ENCODE measurements at regions of chr1 and their contacts with region 1.

Region 1: GRCh38 chr1:109432336-109432735 is 6.1 kb upstream of the PSMA5 start:
- DNase-seq: no peak
- H3K4me3 ChIP-seq: no peak overlapping the region
- H3K27ac ChIP-seq: no peak overlapping the region
- H3K4me1 ChIP-seq: peaks cover 5% of the 10 kb centered on the region
- H3K27me3 ChIP-seq: no peaks in the 10 kb centered on the region
- CTCF ChIP-seq: no peak

Region 2: DNA sequence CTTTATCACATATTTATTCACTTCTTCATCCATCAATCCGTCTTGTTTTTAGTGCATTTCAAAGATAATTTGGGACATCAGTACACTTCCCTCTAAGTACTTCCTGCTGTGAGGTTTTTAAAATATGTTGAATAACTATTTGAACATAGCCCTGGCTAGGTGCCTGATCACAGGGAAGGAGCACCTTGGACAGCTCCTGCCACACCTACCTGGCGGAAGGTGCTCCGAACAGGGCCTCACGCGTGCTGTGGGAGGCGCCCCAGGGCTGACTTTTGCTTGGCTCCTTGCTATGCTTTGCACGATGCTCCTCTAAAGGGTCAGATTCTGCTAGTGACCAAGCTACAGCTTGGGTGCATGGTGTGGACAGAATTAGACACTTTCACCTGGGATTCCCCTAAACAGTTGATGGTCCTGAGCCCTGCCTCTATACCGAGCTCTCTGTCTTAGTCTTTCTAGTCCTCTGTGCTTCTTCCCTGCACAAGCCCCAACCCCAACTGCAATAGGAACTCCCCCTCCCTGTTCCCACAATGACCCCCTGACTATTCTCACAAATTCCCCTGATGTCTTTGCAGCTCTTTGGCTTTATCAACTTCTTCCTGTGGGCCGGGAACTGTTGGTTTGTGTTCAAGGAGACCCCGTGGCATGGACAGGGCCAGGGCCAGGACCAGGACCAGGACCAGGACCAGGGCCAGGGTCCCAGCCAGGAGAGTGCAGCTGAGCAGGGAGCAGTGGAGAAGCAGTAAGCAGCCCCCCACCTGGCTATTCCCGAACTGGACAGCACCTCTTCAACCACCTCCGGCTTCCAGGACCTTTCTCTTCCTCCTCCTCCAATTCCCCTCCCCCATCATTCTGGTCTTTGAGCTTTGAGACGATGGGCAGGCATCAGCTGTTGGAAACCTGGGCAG is 46.7 kb after region 1 on chr1:
- intact Hi-C with region 1: loop called (anchors 5 kb)
- DNase-seq: peak; percentile 58
- H3K4me3 ChIP-seq: no peak overlapping the region
- H3K27ac ChIP-seq: no peak overlapping the region
- H3K4me1 ChIP-seq: peaks cover 6% of the 10 kb centered on the region
- H3K27me3 ChIP-seq: no peaks in the 10 kb centered on the region
- CTCF ChIP-seq: no peak

Measured in colonic mucosa (tissue), 4 donors.